Activated CD8-positive, alpha-beta T cell treated with anti-CD3 and anti-CD28 coated beads, Interleukin-2, amount 10 ng/mL, durations not matched to agents 7 days and 5 days (primary cell): ENCODE measurements at regions of chr6 and their contacts with region 1.

Region 1: GRCh38 chr6:42547407-42548329 is 16.2 kb upstream of the UBR2 start:
- DNase-seq: peak; percentile 90
- ATAC-seq: peak; percentile 100
- H3K4me3 Mint-ChIP-seq: peak overlapping the region; percentile 57
- H3K27ac Mint-ChIP-seq: no peak overlapping the region
- H3K4me1 Mint-ChIP-seq: peaks cover 13% of the 10 kb centered on the region
- H3K27me3 Mint-ChIP-seq: peaks cover 12% of the 10 kb centered on the region

Region 2: DNA sequence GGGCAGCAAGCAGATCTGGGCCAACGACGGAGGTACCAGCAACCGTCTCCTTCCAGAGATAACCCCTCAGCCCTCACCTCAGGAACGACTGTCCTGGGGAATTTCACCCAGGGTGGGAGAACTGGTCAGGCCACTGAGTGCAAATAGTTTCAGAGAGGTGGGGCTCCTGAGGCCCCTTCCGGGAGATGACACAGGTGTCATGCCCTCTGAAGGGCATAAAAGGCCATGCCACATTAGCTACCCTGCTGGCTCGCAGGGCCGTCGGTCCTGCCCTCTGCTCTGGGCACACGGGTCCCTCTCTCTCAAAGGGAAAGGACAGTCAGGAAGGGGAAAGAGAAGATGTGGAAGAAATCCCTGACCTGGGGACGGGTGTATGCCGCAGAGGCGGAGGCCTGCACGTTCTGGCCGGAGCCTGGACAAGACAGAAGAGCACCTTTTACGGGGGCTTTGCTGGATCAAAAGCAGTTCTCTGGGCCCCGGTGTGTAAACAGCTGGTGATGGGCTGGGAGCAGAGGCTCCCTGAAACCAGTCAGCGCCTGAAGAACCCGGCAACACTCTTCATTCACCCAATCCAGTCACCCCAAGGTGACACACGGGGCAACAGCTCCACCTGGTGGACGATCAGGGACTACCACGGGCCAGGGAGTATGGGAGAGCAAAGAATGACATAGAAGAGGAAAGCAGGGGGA is 503.7 kb before region 1 on chr6:
- CTCF ChIA-PET with region 1: interaction called, 12 read pairs
- POLR2A ChIA-PET with region 1: no interaction called
- DNase-seq: peak; percentile 96
- ATAC-seq: peak; percentile 48
- H3K4me3 Mint-ChIP-seq: peak overlapping the region; percentile 75
- H3K27ac Mint-ChIP-seq: peak overlapping the region; percentile 92
- H3K4me1 Mint-ChIP-seq: peaks cover 89% of the 10 kb centered on the region
- H3K27me3 Mint-ChIP-seq: no peaks in the 10 kb centered on the region

Region 3: DNA sequence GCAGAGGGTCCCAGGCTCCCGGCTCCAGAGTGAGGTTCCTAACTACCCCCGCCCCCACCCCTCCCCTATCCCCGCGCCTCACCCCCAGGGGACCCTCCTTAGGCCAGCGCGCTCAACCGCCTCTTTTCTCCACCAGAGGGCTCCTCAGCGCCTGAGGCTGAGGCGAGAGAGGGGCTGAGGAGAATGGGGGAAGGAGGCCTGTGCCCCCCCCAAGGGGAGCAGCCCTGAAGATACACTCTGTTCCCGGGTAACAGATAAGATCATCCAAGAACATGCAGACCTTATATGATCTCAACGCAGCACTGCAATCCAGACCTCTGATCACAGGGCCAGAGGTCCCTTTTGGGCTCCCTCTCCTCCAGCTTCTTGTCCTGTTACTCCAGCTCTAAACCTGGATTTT is 286.7 kb before region 1 on chr6:
- CTCF ChIA-PET with region 1: interaction called, 87 read pairs
- POLR2A ChIA-PET with region 1: interaction called, 4 read pairs
- DNase-seq: peak; percentile 43
- ATAC-seq: peak; percentile 75
- H3K4me3 Mint-ChIP-seq: no peak overlapping the region
- H3K27ac Mint-ChIP-seq: peak overlapping the region; percentile 55
- H3K4me1 Mint-ChIP-seq: peaks cover 11% of the 10 kb centered on the region
- H3K27me3 Mint-ChIP-seq: no peaks in the 10 kb centered on the region

Region 4: DNA sequence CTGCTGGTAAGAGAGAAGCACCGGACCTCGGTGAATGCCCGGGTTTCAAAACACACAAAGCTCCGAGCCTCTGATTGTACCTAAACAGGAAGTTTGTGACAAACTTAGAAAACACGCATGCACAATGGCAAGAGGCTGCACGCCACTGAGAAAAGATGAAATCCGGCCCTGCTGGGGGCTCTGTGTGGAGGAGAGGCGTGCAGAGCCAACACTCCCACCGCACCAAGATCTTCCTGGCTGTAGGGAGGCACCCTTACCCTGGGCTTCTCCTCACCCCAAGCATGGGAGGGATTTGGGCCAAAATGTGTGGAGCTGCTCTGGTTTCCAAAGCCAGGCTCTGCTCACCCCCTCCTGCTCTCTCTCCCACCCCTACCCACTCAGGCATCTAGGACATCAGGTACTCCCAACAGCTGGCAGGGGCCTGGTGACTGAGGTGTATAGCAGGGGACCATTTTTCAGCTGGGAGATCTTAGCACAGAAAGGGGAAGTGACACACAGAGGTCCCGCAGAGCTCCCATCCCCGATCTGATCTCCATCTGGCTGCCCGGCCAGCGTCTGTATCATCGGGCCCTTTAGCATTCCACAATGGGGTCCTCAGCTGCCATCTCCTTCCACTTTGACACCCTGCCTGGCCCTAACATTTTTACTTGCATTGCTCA is 180.2 kb before region 1 on chr6:
- CTCF ChIA-PET with region 1: interaction called, 15 read pairs
- POLR2A ChIA-PET with region 1: no interaction called
- DNase-seq: peak; percentile 48
- ATAC-seq: peak; percentile 59
- H3K4me3 Mint-ChIP-seq: peak overlapping the region; percentile 64
- H3K27ac Mint-ChIP-seq: peak overlapping the region; percentile 90
- H3K4me1 Mint-ChIP-seq: peaks cover 69% of the 10 kb centered on the region
- H3K27me3 Mint-ChIP-seq: no peaks in the 10 kb centered on the region

Region 5: GRCh38 chr6:42440778-42441696 is 106.6 kb before region 1 on chr6:
- CTCF ChIA-PET with region 1: interaction called, 13 read pairs
- POLR2A ChIA-PET with region 1: no interaction called
- DNase-seq: no peak
- ATAC-seq: no peak
- H3K4me3 Mint-ChIP-seq: no peak overlapping the region
- H3K27ac Mint-ChIP-seq: no peak overlapping the region
- H3K4me1 Mint-ChIP-seq: peaks cover 17% of the 10 kb centered on the region
- H3K27me3 Mint-ChIP-seq: no peaks in the 10 kb centered on the region

Region 6: GRCh38 chr6:42511803-42512422 is 35.8 kb before region 1 on chr6:
- CTCF ChIA-PET with region 1: interaction called, 24 read pairs
- POLR2A ChIA-PET with region 1: no interaction called
- DNase-seq: no peak
- ATAC-seq: no peak
- H3K4me3 Mint-ChIP-seq: no peak overlapping the region
- H3K27ac Mint-ChIP-seq: no peak overlapping the region
- H3K4me1 Mint-ChIP-seq: no peaks in the 10 kb centered on the region
- H3K27me3 Mint-ChIP-seq: peaks cover 3% of the 10 kb centered on the region

Region 7: DNA sequence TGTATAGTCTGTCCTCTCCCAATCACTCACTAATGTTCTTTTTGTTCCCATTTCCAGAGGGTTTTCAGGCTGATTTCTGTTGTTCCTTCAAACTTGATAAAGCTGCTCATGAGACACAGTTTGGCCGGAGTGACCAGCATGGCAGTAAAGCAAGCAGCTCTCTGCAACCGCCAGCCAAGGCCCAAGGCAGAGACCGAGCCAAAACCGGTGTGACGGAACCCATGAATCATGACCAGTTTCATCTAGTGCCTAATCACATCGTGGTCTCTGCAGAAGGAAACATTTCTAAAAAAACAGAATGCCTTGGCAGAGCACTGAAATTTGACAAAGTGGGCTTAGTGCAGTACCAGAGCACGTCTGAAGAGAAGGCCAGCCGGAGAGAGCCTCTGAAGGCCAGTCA is 316.9 kb after region 1 on chr6:
- CTCF ChIA-PET with region 1: no interaction called
- POLR2A ChIA-PET with region 1: no interaction called
- DNase-seq: no peak
- ATAC-seq: no peak
- H3K4me3 Mint-ChIP-seq: no peak overlapping the region
- H3K27ac Mint-ChIP-seq: no peak overlapping the region
- H3K4me1 Mint-ChIP-seq: no peaks in the 10 kb centered on the region
- H3K27me3 Mint-ChIP-seq: no peaks in the 10 kb centered on the region